ENCODE measurements at regions of chr11 and their contacts with region 1.

Region 1: DNA sequence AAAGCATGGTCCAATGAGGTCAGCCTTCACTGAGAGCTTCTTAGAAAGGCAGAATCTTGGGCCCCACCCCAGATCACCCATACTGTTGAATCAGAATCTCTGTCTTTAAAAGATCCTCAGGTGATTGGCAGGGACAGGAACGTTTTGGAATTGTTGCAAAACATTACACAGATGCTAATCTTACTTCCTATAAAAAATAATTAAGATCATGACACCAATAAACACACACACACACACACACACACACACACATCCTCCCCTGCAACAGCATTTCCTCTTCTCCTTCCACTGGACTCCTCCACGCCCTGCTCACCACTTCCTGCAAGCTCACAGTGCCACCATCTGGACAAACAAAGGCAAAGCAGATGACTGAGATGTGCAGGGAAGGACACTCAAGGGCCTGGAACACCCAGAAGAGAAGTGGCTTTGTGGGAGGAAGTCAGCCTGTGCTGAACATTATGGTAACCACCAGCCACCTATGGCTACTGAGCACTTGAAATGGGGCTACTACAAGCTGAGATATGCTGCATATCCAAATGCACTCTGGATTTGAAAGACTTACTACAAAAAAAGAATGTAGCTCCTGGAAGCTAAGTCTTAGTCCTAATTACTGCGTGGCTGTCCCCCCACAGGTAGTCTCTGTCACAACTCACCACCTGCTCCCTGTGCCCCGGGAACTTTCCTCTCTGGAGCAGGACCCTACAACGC is 65.6 kb downstream of the BTG4 start:
- DNase-seq: peak in 9 of 10 donors; percentile 75 to 86 (median 80)
- H3K4me3 ChIP-seq: no peak overlapping the region
- H3K27ac ChIP-seq: peak overlapping the region in 28 of 59 donors; percentile 2 to 94 (median 54)
- H3K27me3 ChIP-seq: peaks cover 0 to 3% (median 0%) of the 10 kb centered on the region in 45 donors
- CTCF ChIP-seq: peak; percentile 55 to 90 (median 79)

Region 2: DNA sequence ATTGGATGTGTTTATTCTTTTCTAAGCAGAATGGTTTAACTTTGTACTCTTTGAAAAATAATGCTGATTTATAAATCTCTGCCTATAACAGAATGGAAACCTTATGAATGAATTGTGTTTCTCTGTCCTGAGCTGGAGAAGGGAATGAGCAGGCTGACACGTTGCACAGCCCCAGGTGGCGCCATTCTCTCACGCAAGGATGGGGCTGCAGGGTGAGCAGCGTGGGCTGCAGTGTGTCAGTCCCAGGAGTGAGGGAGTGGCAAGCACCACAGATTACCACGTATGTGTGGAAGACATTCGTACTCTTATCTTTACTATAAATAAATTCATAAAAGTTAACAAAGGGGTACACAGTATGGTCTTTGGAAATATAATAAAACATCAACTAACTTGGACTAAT is 983.4 kb before region 1 on chr11:
- intact Hi-C with region 1: loop called in 1 of 2 experiments (anchors 5 kb)
- DNase-seq: peak in 7 of 10 donors; percentile 32 to 63 (median 54)
- H3K4me3 ChIP-seq: no peak overlapping the region
- H3K27ac ChIP-seq: no peak overlapping the region
- H3K27me3 ChIP-seq: no peaks in the 10 kb centered on the region
- CTCF ChIP-seq: peak in 51 of 56 donors; percentile 9 to 69 (median 45)

Region 3: GRCh38 chr11:111166598-111166997 is 280.0 kb before region 1 on chr11:
- intact Hi-C with region 1: no loop called
- DNase-seq: no peak
- H3K4me3 ChIP-seq: no peak overlapping the region
- H3K27ac ChIP-seq: no peak overlapping the region
- H3K27me3 ChIP-seq: no peaks in the 10 kb centered on the region
- CTCF ChIP-seq: no peak

Region 4: DNA sequence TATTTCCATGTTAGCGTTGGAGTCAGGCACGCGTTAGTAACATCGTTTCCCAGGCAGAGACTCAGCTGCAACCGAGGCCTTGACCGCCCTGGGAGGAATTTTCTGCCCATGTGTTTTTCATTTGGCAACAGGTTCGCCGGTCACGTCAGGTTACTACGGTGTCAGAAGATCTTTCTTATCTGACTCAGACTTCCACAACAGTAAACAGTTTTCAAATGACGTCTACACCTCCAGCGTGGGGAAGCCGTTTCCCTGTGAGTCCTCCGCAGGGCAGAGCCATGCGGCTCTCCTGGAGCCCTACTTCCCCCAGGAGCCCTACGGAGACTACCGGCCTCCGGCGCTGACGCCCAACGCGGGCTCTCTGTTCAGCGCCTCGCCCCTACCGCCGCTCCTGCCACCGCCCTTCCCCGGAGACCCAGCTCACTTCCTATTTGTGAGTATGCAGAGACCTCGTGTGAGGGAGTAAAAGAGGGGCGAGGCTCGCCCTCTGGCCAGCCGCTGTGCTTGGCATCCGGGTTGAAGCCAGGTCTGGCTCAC is 162.5 kb before region 1 on chr11:
- intact Hi-C with region 1: loop called (anchors 1 to 5 kb)
- DNase-seq: no peak
- H3K4me3 ChIP-seq: no peak overlapping the region
- H3K27ac ChIP-seq: peak overlapping the region in 1 of 59 donors; percentile 10
- H3K27me3 ChIP-seq: no peaks in the 10 kb centered on the region
- CTCF ChIP-seq: no peak

Region 5: DNA sequence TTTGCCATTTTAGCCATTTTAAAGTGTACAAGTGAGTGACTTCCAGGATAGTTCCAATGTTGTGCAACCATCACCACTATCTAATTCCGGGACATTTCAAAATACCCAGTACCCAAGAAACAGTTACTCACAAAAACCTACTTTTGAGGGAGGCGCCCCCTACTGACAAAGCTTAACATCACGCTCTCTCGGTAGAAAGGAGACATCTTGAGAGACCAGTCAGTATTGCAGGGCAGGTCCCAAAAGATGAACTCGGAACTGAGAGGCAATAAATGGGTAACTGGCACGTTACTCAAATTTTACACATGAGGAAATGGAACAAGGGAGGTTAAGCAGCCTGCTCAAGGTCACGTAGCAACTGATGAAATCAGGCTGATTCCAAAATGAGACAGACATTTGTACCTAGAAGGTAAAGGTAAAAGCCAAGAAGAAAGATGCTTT is 17.5 kb before region 1 on chr11:
- intact Hi-C with region 1: no loop called
- DNase-seq: peak in 1 of 10 donors; percentile 23
- H3K4me3 ChIP-seq: no peak overlapping the region
- H3K27ac ChIP-seq: no peak overlapping the region
- H3K27me3 ChIP-seq: peaks cover 0 to 12% (median 0%) of the 10 kb centered on the region in 45 donors
- CTCF ChIP-seq: peak in 53 of 56 donors; percentile 23 to 63 (median 49)

Region 6: DNA sequence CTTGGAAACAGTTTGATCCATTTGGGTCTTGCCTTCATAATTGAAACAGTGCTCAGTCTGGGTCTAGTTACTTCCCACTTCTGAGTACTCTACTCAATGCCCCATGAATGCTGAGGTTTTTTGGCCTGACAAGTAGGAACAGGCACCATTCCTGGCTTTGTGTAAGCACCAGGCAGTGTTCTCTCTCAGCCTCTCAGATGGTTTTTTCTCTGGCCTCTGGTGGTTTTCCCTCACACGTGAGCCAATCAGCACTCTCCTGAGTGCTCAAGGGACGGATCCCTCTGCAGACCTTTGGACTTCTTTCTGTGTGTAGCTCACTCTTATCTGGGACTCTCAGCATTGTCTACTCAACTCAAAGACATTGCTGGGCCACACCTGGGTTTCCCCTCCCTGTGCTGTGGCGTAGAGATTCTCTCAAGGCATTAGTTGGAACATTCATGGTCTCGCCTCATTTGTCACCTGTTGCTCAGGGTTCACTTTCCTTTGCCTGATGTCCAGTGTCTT is 177.0 kb after region 1 on chr11:
- intact Hi-C with region 1: no loop called
- DNase-seq: no peak
- H3K4me3 ChIP-seq: no peak overlapping the region
- H3K27ac ChIP-seq: no peak overlapping the region
- H3K27me3 ChIP-seq: no peaks in the 10 kb centered on the region
- CTCF ChIP-seq: no peak

Region 7: DNA sequence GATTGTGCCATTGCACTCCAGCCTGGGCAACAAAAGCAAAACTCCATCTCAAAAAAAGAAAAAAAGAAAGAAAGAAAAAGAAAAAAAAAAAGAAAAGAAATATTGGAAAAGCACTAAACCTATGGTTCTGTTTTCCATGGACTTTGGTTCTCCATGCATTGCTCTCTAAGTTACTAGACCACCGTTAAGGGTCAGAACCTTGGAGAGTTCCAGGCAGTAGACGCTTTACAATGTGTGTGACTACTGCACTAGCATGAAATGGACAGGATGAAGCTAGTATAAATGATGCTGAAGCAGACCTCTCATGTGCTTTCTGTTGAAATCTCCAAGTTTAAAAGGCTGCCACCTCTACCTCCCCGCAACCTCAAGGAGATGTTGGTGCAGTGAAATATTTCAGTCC is 219.2 kb after region 1 on chr11:
- intact Hi-C with region 1: no loop called
- DNase-seq: no peak
- H3K4me3 ChIP-seq: no peak overlapping the region
- H3K27ac ChIP-seq: no peak overlapping the region
- H3K27me3 ChIP-seq: no peaks in the 10 kb centered on the region
- CTCF ChIP-seq: no peak

Measured in dorsolateral prefrontal cortex (tissue), 120 donors.